Esophagus squamous epithelium (tissue), 5 donors: ENCODE measurements at regions of chr10 and their contacts with region 1.

Region 1: DNA sequence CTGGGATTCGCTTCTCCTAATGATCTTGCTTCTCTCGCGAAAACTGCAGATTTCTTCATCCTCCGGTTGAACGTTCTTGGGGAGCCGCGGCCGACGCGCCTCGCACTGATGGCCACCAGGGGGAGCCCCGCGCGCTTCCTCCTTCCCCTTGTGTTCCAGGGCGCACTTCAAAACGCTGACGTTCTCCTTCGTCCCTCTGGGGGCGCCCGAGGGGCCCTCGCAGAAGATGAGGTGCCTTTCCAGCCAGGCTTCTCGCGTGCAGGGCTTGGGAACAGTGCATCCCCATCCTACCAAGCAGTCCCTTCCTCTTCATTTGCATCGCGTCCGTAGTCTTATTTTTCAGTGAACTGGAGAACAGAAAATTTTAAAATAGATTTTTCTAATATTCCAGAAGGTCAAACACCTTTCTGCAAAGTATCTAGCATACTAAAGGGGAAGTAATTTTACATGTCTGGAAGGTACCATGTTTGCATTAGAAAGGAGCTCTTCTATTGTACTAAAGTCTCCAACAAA is 22.5 kb downstream of the GSTO2 start:
- DNase-seq: peak; percentile 47
- H3K4me3 ChIP-seq: no peak overlapping the region
- H3K27ac ChIP-seq: no peak overlapping the region
- H3K4me1 ChIP-seq: peaks cover 0 to 16% (median 0%) of the 10 kb centered on the region in 3 donors
- H3K27me3 ChIP-seq: no peaks in the 10 kb centered on the region
- CTCF ChIP-seq: peak; percentile 99 to 100 (median 100)
- POLR2A ChIP-seq: no peak

Region 2: GRCh38 chr10:103598654-103599115 is 692.8 kb before region 1 on chr10:
- intact Hi-C with region 1: no loop called
- DNase-seq: no peak
- H3K4me3 ChIP-seq: no peak overlapping the region
- H3K27ac ChIP-seq: peak overlapping the region in 2 of 4 donors; percentile 35 to 45
- H3K4me1 ChIP-seq: peaks cover 0 to 55% (median 9%) of the 10 kb centered on the region in 3 donors
- H3K27me3 ChIP-seq: no peaks in the 10 kb centered on the region
- CTCF ChIP-seq: peak; percentile 29 to 65 (median 56)
- POLR2A ChIP-seq: no peak

Region 3: DNA sequence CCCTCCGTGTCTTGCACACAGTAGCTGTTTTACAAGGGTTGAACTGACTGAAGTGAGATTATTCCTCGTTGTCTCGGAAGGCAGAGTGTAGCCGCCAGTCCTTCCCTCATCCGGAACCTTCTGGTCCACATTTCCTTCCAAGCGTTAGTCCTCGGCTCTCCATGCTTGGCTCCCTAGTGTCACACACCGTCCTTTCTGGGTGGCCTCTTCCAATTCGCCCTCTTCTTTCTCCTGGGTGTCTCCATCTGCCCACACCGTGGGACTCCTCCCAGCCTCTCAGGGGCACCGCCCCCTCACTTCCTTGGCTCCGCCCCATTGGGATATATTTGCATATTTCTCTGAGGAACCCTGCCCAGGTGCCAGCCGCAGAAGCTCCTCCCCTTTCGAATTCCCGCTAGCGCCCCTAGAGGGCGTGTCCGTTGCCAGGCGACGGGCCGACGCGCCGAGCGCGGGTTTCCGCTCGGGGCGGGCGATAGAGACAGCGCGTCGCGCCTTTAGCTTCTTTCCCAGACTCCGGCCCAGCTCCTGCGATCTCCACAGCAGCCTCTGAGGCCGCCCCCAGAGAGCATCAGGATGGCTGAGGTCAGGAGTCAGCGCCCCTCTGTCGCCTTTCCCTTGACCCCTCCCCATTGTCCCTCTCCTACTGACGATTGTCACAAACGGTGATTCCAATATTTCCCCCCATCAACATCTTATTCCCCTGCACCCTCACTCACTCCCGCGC is 62.0 kb after region 1 on chr10 and contains the start of gene CFAP58:
- intact Hi-C with region 1: loop called (anchors 5 kb)
- DNase-seq: peak; percentile 58
- H3K4me3 ChIP-seq: peak within 1 kb of the TSS; percentile 22 to 66 (median 44)
- H3K27ac ChIP-seq: peak within 1 kb of the TSS in 2 of 4 donors; percentile 48 to 61
- H3K4me1 ChIP-seq: peaks cover 13 to 52% (median 15%) of the 10 kb centered on the region in 3 donors
- H3K27me3 ChIP-seq: no peaks in the 10 kb centered on the region
- CTCF ChIP-seq: peak; percentile 40 to 85 (median 72)
- POLR2A ChIP-seq: peak in 1 of 4 donors; percentile 57
- total RNA-seq, gene CFAP58: 0.13 to 0.41 (median 0.19) TPM in 3 of 4 donors, not detected in the other